Activated CD4-positive, alpha-beta T cell treated with anti-CD3 and anti-CD28 coated beads for 36 hours (primary cell): ENCODE measurements at regions of chr3 and their contacts with region 1.

Region 1: GRCh38 chr3:119240591-119241434 is at the start of gene B4GALT4:
- DNase-seq: peak; percentile 86
- ATAC-seq: peak; percentile 75
- H3K4me3 Mint-ChIP-seq: peak within 1 kb of the TSS; percentile 89
- H3K27ac Mint-ChIP-seq: peak within 1 kb of the TSS; percentile 99
- H3K4me1 Mint-ChIP-seq: peaks cover 40% of the 10 kb centered on the region
- H3K27me3 Mint-ChIP-seq: no peaks in the 10 kb centered on the region
- total RNA-seq, gene B4GALT4: 16.6 to 16.7 TPM

Region 2: GRCh38 chr3:118884748-118885206 is 356.0 kb before region 1 on chr3:
- CTCF ChIA-PET with region 1: interaction called, 40 read pairs
- POLR2A ChIA-PET with region 1: no interaction called
- intact Hi-C with region 1: loop called (anchors 1 kb)
- DNase-seq: peak; percentile 89
- ATAC-seq: peak; percentile 89
- H3K4me3 Mint-ChIP-seq: no peak overlapping the region
- H3K27ac Mint-ChIP-seq: no peak overlapping the region
- H3K4me1 Mint-ChIP-seq: peaks cover 3% of the 10 kb centered on the region
- H3K27me3 Mint-ChIP-seq: peaks cover 17% of the 10 kb centered on the region

Region 3: GRCh38 chr3:119098619-119099222 is 142.1 kb before region 1 on chr3:
- CTCF ChIA-PET with region 1: interaction called, 3 read pairs
- POLR2A ChIA-PET with region 1: no interaction called
- intact Hi-C with region 1: loop called in 1 of 2 experiments (anchors 2 kb)
- DNase-seq: no peak
- ATAC-seq: peak; percentile 36
- H3K4me3 Mint-ChIP-seq: no peak overlapping the region
- H3K27ac Mint-ChIP-seq: no peak overlapping the region
- H3K4me1 Mint-ChIP-seq: no peaks in the 10 kb centered on the region
- H3K27me3 Mint-ChIP-seq: no peaks in the 10 kb centered on the region

Region 4: DNA sequence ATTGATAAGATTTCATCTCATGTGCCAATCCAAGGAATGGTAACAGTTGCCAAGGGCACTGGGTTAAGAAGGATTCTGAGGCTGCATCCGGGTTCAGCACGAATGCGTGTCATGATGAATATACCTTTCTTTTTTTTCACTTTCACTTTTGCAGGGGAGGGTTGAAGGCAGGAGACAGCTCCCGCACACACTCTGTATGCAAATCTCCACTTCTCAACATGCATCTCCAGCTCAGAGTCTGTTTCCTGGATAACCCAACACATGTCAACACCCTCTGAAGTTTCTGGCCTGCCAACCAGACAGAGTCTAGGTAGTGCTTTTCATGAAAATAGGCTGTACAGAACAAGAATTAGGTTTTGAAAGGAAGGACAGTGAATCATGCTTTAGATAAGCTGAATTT is 21.7 kb before region 1 on chr3:
- CTCF ChIA-PET with region 1: interaction called, 27 read pairs
- POLR2A ChIA-PET with region 1: interaction called, 8 read pairs
- intact Hi-C with region 1: loop called (anchors 1 to 2 kb)
- DNase-seq: peak; percentile 64
- ATAC-seq: peak; percentile 93
- H3K4me3 Mint-ChIP-seq: peak overlapping the region; percentile 45
- H3K27ac Mint-ChIP-seq: peak overlapping the region; percentile 84
- H3K4me1 Mint-ChIP-seq: peaks cover 51% of the 10 kb centered on the region
- H3K27me3 Mint-ChIP-seq: no peaks in the 10 kb centered on the region

Region 5: GRCh38 chr3:119293871-119294695 is 53.3 kb after region 1 on chr3 and contains the start of gene ARHGAP31:
- CTCF ChIA-PET with region 1: interaction called, 12 read pairs
- POLR2A ChIA-PET with region 1: no interaction called
- intact Hi-C with region 1: loop called (anchors 1 to 2 kb)
- DNase-seq: peak; percentile 93
- ATAC-seq: peak; percentile 78
- H3K4me3 Mint-ChIP-seq: peak within 1 kb of the TSS; percentile 82
- H3K27ac Mint-ChIP-seq: peak within 1 kb of the TSS; percentile 93
- H3K4me1 Mint-ChIP-seq: peaks cover 52% of the 10 kb centered on the region
- H3K27me3 Mint-ChIP-seq: no peaks in the 10 kb centered on the region
- total RNA-seq, gene ARHGAP31: 9.2 to 9.6 TPM

Region 6: GRCh38 chr3:119352849-119353502 is 112.2 kb after region 1 on chr3:
- CTCF ChIA-PET with region 1: interaction called, 28 read pairs
- POLR2A ChIA-PET with region 1: interaction called, 3 read pairs
- intact Hi-C with region 1: loop called (anchors 1 kb)
- DNase-seq: no peak
- ATAC-seq: peak; percentile 63
- H3K4me3 Mint-ChIP-seq: no peak overlapping the region
- H3K27ac Mint-ChIP-seq: peak overlapping the region; percentile 32
- H3K4me1 Mint-ChIP-seq: peaks cover 34% of the 10 kb centered on the region
- H3K27me3 Mint-ChIP-seq: no peaks in the 10 kb centered on the region

Region 7: DNA sequence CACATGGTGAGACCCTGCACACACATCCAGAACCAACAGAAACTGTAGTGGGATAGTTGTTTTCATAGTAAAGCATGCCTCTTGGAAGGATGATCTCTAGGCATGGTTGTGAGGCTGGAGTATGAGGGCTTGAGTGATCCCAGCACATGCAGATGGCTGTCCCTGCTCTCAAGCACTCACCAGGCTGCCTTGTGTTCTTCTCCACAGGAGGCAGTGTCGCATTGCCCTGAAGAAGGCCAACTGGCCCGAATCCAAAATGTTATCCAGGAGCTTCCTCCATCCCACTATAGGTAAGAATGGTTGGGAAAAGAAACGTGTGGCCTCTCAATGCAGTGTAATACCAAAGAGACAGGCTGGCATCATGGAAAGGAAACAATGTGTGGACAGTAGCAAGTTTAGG is 139.9 kb after region 1 on chr3:
- CTCF ChIA-PET with region 1: no interaction called
- POLR2A ChIA-PET with region 1: no interaction called
- intact Hi-C with region 1: no loop called
- DNase-seq: no peak
- ATAC-seq: no peak
- H3K4me3 Mint-ChIP-seq: no peak overlapping the region
- H3K27ac Mint-ChIP-seq: no peak overlapping the region
- H3K4me1 Mint-ChIP-seq: no peaks in the 10 kb centered on the region
- H3K27me3 Mint-ChIP-seq: no peaks in the 10 kb centered on the region

Region 8: DNA sequence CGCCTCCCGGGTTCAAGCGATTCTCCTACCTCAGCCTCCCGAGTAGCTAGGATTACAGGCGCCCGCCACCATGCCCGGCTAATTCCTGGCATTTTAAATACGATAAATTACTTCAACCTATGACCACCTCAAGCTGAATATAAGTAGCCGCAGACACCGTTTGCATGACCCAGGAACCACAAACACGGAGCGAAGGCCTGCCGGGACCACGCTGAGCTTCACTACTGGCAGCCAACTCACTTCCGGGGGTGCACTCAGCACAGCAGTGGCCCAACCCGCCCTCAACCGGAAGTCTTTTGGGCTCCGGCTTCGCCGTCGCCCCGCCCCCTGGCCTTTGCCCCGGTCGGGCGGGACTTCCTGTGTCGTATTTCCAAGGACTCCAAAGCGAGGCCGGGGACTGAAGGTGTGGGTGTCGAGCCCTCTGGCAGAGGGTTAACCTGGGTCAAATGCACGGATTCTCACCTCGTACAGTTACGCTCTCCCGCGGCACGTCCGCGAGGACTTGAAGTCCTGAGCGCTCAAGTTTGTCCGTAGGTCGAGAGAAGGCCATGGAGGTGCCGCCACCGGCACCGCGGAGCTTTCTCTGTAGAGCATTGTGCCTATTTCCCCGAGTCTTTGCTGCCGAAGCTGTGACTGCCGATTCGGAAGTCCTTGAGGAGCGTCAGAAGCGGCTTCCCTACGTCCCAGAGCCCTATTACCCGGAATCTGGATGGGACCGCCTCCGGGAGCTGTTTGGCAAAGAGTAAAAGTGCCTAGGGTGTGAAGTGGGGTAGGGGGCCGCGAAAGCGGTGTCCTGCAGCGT is 257.6 kb after region 1 on chr3 and contains the start of gene TIMMDC1:
- CTCF ChIA-PET with region 1: interaction called, 4 read pairs
- POLR2A ChIA-PET with region 1: no interaction called
- intact Hi-C with region 1: loop called in 1 of 2 experiments (anchors 2 kb)
- DNase-seq: peak; percentile 99
- ATAC-seq: peak; percentile 99
- H3K4me3 Mint-ChIP-seq: peak within 1 kb of the TSS; percentile 96
- H3K27ac Mint-ChIP-seq: peak within 1 kb of the TSS; percentile 99
- H3K4me1 Mint-ChIP-seq: peaks cover 39% of the 10 kb centered on the region
- H3K27me3 Mint-ChIP-seq: no peaks in the 10 kb centered on the region
- total RNA-seq, gene TIMMDC1: 82.3 to 96.0 TPM